Activated CD4-positive, alpha-beta memory T cell treated with anti-CD3 and anti-CD28 coated beads for 36 hours (primary cell): ENCODE measurements at regions of chr6 and their contacts with region 1.

Region 1: GRCh38 chr6:34196126-34196830 is 40.4 kb upstream of the HMGA1 start:
- DNase-seq: peak; percentile 91
- H3K4me3 Mint-ChIP-seq: peak overlapping the region; percentile 72
- H3K27ac Mint-ChIP-seq: no peak overlapping the region
- H3K4me1 Mint-ChIP-seq: peaks cover 15% of the 10 kb centered on the region
- H3K27me3 Mint-ChIP-seq: no peaks in the 10 kb centered on the region

Region 2: GRCh38 chr6:34182751-34183531 is 13.3 kb before region 1 on chr6:
- CTCF ChIA-PET with region 1: interaction called, 19 read pairs
- POLR2A ChIA-PET with region 1: interaction called, 6 read pairs
- intact Hi-C with region 1: no loop called
- DNase-seq: peak; percentile 87
- H3K4me3 Mint-ChIP-seq: peak overlapping the region; percentile 65
- H3K27ac Mint-ChIP-seq: peak overlapping the region; percentile 81
- H3K4me1 Mint-ChIP-seq: peaks cover 16% of the 10 kb centered on the region
- H3K27me3 Mint-ChIP-seq: no peaks in the 10 kb centered on the region

Region 3: DNA sequence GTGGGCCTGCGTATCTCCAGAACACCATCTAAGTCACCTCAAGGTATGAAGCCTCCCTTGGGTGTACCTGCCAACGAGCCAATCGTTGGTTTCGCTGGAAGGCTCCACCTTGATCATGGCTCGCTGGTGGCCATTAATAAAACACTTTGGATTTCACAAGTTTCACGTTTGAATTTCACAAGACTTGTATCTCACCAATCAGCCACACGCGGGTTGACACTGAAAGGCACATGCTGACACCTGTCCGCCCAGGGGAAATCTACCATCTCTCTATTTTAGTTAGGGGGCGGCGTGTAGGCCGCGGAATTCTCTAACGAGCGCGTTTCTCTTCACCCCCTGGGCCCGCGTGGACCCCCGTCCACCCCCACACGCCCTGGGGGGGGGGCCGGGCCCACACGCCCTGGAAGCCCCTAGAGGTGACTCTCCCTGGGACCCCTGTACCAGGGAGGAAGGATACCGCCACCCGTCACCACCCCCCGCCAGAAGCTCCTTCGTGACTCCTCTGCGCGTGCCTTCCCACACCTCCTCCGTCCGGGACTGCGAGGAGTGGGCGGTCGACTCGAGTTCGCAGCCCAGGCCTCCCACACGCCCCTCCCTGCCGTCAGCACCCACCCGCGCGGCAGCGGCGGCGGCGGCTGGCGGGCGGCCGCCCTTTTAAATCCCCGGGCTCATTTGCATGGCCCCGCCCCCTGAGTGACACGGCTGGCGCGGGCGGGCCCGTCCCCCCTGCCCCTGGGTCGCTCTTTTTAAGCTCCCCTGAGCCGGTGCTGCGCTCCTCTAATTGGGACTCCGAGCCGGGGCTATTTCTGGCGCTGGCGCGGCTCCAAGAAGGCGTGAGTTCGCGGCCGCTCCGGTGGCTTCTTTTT is 40.1 kb after region 1 on chr6 and contains the start of gene HMGA1:
- CTCF ChIA-PET with region 1: interaction called, 15 read pairs
- POLR2A ChIA-PET with region 1: interaction called, 3 read pairs
- intact Hi-C with region 1: loop called (anchors 2 kb)
- DNase-seq: peak; percentile 91
- H3K4me3 Mint-ChIP-seq: peak within 1 kb of the TSS; percentile 88
- H3K27ac Mint-ChIP-seq: peak within 1 kb of the TSS; percentile 93
- H3K4me1 Mint-ChIP-seq: peaks cover 41% of the 10 kb centered on the region
- H3K27me3 Mint-ChIP-seq: no peaks in the 10 kb centered on the region
- total RNA-seq, gene HMGA1: 422 to 429 TPM

Region 4: DNA sequence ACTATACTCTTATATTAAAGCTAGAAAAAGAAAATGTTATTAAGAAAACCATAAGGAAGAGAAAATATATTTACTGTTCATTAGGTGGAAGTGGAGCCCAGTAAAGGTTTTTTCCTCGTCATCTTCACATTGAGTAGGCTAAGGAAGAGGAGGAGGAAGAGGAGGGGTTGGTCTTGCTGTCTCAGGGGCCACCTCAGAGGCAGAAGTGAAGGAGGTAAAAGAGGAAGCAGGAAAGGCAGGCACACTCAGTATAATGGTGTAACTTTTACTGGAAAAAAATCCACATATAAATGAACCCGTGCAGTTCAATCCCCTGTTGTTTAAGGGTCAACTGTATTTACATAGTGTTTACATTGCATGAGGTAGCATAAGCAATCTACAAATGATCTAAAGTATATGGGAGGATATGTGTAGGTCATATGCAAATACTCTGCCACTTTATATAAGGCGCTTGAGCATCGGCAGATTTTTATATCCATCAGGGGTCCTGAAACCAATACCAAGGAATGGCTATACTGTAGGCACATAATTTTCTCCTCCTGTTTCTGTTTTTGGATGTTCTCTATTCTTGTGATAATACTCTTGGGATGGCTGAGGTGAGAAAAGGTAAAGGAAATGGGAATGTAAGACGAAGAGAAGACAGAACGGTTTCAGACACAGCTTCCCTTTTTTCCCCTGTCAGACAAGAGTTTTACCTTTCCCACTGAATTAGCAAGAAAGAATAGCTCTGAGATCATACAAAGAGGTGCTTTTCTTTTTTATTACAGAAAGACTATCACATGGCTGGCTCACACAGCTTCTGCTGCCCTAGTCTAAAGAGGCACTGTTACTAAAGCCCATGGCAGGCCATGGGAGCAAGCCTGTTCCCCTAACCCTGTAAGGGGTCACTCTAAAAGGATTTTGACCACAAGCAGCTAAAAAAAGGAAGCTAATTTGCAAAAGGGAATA is 136.2 kb after region 1 on chr6:
- CTCF ChIA-PET with region 1: no interaction called
- POLR2A ChIA-PET with region 1: no interaction called
- intact Hi-C with region 1: no loop called
- DNase-seq: no peak
- H3K4me3 Mint-ChIP-seq: no peak overlapping the region
- H3K27ac Mint-ChIP-seq: no peak overlapping the region
- H3K4me1 Mint-ChIP-seq: peaks cover 14% of the 10 kb centered on the region
- H3K27me3 Mint-ChIP-seq: no peaks in the 10 kb centered on the region

Region 5: DNA sequence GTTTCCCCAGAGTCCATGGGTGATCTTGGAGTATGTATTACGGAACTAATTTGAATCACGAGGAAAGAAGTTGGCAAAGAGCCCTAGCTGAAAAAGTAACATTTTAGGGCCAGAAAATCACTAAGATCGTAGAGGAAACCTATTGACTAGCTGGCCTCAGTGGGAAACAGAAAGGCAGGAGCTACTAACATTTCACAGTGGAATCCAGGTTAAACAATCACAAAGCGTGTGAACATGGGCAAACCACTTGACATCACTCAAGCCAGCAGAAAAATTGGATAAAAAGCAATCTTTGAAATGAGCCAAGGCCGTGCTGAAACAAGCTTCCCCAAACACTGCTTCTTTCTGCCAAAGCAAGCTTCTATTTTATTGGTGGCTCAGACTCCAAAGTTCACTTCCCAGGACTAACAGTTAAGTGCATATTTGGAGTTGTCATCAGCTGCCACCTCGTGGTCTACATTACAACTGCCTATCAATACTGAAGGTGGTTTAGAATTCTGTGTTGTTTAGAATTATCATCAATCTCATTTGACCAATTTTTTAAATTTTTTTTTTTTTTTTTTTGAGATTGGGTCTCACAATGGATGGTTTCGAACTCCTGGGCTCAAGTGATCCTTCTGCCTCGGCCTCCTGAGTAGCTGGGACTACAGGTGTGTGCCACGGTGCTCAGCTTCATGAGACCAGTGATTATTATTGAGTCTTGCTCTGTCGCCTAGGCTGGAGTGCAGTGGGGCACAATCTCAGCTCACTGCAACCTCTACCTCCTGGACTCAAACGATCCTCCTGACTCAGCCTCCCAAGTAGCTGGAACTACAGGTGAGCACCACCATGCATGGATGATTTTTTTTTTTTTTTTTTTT is 219.0 kb after region 1 on chr6:
- CTCF ChIA-PET with region 1: interaction called, 42 read pairs
- POLR2A ChIA-PET with region 1: interaction called, 6 read pairs
- intact Hi-C with region 1: loop called (anchors 1 kb)
- DNase-seq: peak; percentile 35
- H3K4me3 Mint-ChIP-seq: no peak overlapping the region
- H3K27ac Mint-ChIP-seq: peak overlapping the region; percentile 8
- H3K4me1 Mint-ChIP-seq: peaks cover 12% of the 10 kb centered on the region
- H3K27me3 Mint-ChIP-seq: no peaks in the 10 kb centered on the region